BJ (cell line): ENCODE measurements at regions of chr11 and their contacts with region 1.

Region 1: DNA sequence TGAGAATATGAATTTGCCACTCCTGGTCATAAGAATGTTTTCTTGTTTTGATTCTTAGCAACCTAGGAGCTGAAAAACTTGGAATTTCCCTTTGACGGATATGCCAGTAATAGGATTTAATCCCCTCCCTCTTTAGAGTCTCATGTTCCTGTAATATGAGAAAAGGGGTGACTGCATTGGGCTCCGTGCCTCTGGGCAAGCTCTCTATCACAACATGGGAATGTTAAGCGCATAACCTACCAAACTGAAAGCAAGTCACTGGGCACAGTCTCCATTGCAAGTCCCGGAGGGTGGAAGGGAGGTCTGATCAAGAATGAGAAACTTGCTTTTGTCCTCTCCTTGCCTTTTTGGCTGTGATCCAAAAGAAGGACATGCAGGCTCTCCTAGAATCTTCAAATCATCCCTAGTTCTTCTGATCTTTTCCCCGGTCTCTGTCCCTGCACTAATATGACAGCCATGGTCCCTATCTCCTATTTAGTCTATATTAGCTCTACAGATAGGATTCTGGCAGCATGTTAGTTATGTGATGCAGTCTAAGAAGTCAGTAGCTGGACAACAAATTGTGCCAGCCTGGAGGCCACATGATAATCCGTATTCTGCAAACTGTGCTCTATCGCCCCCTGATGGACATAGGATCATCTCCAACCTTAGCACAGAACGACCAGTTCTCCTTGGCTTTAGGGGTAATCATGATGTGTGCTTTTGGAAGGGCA is 11.7 kb downstream of the OR10D3 start:
- DNase-seq: no peak
- H3K4me3 ChIP-seq: no peak overlapping the region
- H3K27me3 ChIP-seq: no peaks in the 10 kb centered on the region
- CTCF ChIP-seq: peak; percentile 85

Region 2: GRCh38 chr11:124070915-124071635 is 123.8 kb before region 1 on chr11:
- CTCF ChIA-PET with region 1: interaction called, 80 read pairs
- POLR2A ChIA-PET with region 1: no interaction called
- DNase-seq: peak; percentile 22
- H3K4me3 ChIP-seq: no peak overlapping the region
- H3K27me3 ChIP-seq: peaks cover 4% of the 10 kb centered on the region
- CTCF ChIP-seq: peak; percentile 81

Region 3: DNA sequence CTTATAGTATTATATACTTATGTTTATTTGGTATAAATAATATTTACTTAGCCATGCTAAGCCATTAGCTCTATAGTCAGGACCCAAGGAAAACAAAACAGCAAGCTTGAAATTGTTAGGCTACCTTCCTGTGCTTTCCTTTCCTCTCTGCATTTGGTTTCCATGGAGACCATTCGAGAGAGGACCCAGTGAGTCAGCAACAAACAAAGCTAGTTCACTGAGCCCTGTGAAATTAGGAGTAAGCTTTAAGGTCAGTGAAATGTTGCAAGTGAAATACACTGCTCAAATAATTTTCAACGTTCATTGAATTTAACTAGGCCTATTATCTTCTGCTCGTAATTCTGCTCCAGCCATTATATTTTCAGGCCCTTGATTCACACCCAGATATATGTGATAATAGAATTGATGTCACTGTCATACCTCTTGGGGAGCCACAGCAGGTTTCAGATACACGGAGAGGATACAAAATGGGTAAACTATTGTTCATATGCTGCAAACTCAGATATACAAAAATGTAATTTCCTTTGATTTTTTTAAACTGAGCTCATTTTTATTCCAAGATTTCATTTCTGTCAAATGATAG is 20.8 kb before region 1 on chr11:
- CTCF ChIA-PET with region 1: interaction called, 12 read pairs
- POLR2A ChIA-PET with region 1: no interaction called
- DNase-seq: no peak
- H3K4me3 ChIP-seq: no peak overlapping the region
- H3K27me3 ChIP-seq: no peaks in the 10 kb centered on the region
- CTCF ChIP-seq: no peak